Common myeloid progenitor, CD34-positive (primary cell): ENCODE measurements at regions of chr16 and their contacts with region 1.

Region 1: DNA sequence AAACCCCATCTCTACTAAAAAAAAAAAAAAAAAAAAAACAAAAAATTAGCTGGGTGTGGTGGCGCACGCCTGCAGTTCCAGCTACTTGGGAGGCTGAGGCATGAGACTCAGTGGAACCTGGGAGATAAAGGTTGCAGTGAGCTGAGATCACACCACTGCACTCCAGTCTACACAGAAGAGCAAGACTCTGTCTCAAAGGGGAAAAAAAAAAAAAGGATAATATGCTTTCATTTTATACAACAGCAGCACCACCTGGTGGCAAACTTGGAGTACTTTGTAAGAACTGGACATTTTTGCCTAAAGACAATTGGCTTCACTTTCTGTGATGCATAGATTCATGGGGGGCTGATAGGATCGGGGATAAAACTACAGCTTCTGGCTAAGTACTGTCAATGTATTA is 8.5 kb downstream of the CHTF8 start:
- DNase-seq: peak; percentile 75 to 89 (median 84)
- H3K4me3 ChIP-seq: no peak overlapping the region
- H3K27ac ChIP-seq: no peak overlapping the region
- H3K4me1 ChIP-seq: no peaks in the 10 kb centered on the region
- H3K27me3 ChIP-seq: no peaks in the 10 kb centered on the region

Region 2: GRCh38 chr16:68528686-68529379 is 595.1 kb before region 1 on chr16:
- CTCF ChIA-PET with region 1: interaction called, 15 read pairs
- POLR2A ChIA-PET with region 1: no interaction called
- DNase-seq: peak; percentile 82 to 91 (median 89)
- H3K4me3 ChIP-seq: peak overlapping the region in 1 of 7 experiments; percentile 10
- H3K27ac ChIP-seq: no peak overlapping the region
- H3K4me1 ChIP-seq: peaks cover 0 to 20% (median 14%) of the 10 kb centered on the region in 4 experiments
- H3K27me3 ChIP-seq: peaks cover 0 to 9% (median 0%) of the 10 kb centered on the region in 5 experiments

Region 3: GRCh38 chr16:68910051-68910450 is 213.9 kb before region 1 on chr16:
- CTCF ChIA-PET with region 1: interaction called, 10 read pairs
- POLR2A ChIA-PET with region 1: no interaction called
- DNase-seq: no peak
- H3K4me3 ChIP-seq: no peak overlapping the region
- H3K27ac ChIP-seq: no peak overlapping the region
- H3K4me1 ChIP-seq: no peaks in the 10 kb centered on the region
- H3K27me3 ChIP-seq: peaks cover 0 to 2% (median 0%) of the 10 kb centered on the region in 5 experiments

Region 4: GRCh38 chr16:69083329-69083941 is 40.5 kb before region 1 on chr16:
- CTCF ChIA-PET with region 1: interaction called, 13 read pairs
- POLR2A ChIA-PET with region 1: no interaction called
- DNase-seq: no peak
- H3K4me3 ChIP-seq: no peak overlapping the region
- H3K27ac ChIP-seq: no peak overlapping the region
- H3K4me1 ChIP-seq: peaks cover 0 to 11% (median 9%) of the 10 kb centered on the region in 4 experiments
- H3K27me3 ChIP-seq: no peaks in the 10 kb centered on the region

Region 5: DNA sequence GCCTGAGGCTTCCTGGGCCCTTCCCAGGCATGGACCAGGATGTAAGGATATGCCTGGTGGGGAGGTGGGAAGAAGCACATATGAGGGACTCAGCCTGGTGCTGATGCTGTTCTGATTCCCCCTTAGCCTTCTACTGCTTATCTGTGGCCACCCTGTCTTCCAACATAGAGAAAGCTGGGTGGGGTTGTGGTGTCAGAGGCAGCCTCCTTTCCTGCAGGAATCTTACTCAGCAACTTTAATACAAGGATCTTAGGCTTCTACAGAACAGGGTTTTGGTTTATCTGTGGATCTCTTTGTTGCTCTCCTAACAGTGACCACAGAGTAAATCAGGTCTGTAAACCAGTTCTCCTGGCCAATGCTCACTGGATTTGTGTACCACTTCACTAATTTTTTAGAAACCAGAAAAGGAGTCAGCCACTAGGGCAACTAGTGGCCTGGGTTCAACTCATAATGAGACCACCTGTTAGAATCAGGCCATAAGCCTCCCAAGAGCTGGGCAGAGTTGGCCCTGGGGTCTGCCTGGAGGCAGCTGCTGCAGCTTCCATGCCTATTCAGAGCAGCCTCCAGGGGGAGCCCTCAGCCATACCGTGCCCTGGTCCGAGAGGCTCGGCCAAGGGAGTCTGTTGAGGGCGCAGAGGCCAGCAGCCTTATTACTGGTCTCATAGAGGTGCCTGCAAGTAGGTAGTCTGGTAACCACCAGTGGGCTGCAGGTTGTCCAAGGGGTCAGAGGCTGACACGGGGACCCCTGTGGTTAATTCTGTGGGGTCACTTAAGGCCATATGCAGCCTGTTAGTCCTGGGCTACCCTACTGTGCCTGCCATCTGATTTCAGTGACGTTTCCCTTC is 11.4 kb before region 1 on chr16:
- CTCF ChIA-PET with region 1: interaction called, 71 read pairs
- POLR2A ChIA-PET with region 1: no interaction called
- DNase-seq: peak in 2 of 3 donors; percentile 44 to 52
- H3K4me3 ChIP-seq: no peak overlapping the region
- H3K27ac ChIP-seq: no peak overlapping the region
- H3K4me1 ChIP-seq: peaks cover 0 to 20% (median 11%) of the 10 kb centered on the region in 4 experiments
- H3K27me3 ChIP-seq: peaks cover 0 to 24% (median 3%) of the 10 kb centered on the region in 5 experiments